Psoas muscle (tissue), 8 donors: ENCODE measurements at regions of chr21 and their contacts with region 1.

Region 1: GRCh38 chr21:41108668-41109563 is 59.0 kb upstream of the BACE2 start:
- DNase-seq: no peak
- ATAC-seq: no peak
- H3K4me3 ChIP-seq: no peak overlapping the region
- H3K27ac ChIP-seq: no peak overlapping the region
- H3K4me1 ChIP-seq: no peaks in the 10 kb centered on the region
- H3K27me3 ChIP-seq: peaks cover 0 to 7% (median 2%) of the 10 kb centered on the region in 3 donors
- CTCF ChIP-seq: no peak

Region 2: GRCh38 chr21:40886941-40887340 is 222.0 kb before region 1 on chr21:
- intact Hi-C with region 1: no loop called
- DNase-seq: no peak
- ATAC-seq: no peak
- H3K4me3 ChIP-seq: no peak overlapping the region
- H3K27ac ChIP-seq: no peak overlapping the region
- H3K4me1 ChIP-seq: no peaks in the 10 kb centered on the region
- H3K27me3 ChIP-seq: no peaks in the 10 kb centered on the region
- CTCF ChIP-seq: no peak

Region 3: GRCh38 chr21:41133896-41134522 is 25.1 kb after region 1 on chr21:
- intact Hi-C with region 1: loop called in 1 of 2 experiments (anchors 2 kb)
- DNase-seq: no peak
- ATAC-seq: peak; percentile 49 to 63 (median 56)
- H3K4me3 ChIP-seq: no peak overlapping the region
- H3K27ac ChIP-seq: no peak overlapping the region
- H3K4me1 ChIP-seq: no peaks in the 10 kb centered on the region
- H3K27me3 ChIP-seq: peaks cover 0 to 6% (median 0%) of the 10 kb centered on the region in 3 donors
- CTCF ChIP-seq: peak; percentile 45

Region 4: GRCh38 chr21:41167348-41168342 is 58.7 kb after region 1 on chr21 and contains the start of gene BACE2:
- intact Hi-C with region 1: no loop called
- DNase-seq: peak; percentile 83 to 85
- ATAC-seq: peak; percentile 70 to 83 (median 77)
- H3K4me3 ChIP-seq: peak within 1 kb of the TSS; percentile 72
- H3K27ac ChIP-seq: peak within 1 kb of the TSS; percentile 84
- H3K4me1 ChIP-seq: no peaks in the 10 kb centered on the region
- H3K27me3 ChIP-seq: peaks cover 0 to 9% (median 0%) of the 10 kb centered on the region in 3 donors
- CTCF ChIP-seq: peak; percentile 47
- total RNA-seq, gene BACE2: 5.3 to 13.9 (median 9.1) TPM

Region 5: DNA sequence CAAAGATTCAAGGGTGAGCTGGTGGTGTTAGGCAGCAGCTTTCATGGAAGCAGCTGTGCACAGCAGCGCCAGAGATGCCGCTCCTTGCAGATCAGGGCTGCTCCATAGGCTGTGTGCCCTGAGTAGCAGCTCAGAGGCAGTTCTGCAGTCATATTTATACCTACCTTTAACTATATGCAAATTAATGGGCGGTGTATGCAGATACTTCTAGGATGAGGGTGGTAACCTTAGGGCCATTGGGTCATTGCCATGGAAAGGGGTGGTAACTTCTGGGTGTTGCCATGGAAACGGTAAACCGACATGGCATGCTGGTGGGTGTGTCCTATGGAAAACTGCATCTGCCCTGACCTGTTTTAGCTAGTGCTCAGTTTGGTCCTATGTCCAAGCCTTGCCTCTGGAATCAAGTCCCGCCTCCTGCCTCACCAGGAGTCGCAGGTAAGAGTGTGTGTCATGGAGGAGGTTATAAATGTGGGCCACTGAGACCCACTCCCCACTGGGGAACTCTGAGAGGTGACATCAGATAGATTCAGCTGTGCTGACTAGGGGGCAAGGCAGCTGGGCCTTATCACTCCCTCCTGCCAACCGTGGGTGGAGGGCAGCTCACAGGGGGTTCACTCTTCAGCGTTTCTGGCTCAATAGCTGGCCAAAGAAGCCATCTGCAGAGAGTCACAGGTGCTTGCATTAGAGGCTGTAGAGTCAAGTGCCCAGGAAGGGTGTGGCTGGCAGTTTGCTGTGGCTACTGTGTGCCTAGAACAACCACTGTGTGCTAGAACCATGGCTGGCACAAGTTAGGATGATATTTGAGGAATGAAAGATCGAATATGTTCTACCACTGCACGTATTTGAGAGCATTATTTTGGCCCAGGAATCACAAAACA is 78.0 kb after region 1 on chr21:
- intact Hi-C with region 1: no loop called
- DNase-seq: no peak
- ATAC-seq: no peak
- H3K4me3 ChIP-seq: no peak overlapping the region
- H3K27ac ChIP-seq: no peak overlapping the region
- H3K4me1 ChIP-seq: no peaks in the 10 kb centered on the region
- H3K27me3 ChIP-seq: no peaks in the 10 kb centered on the region
- CTCF ChIP-seq: no peak